ENCODE measurements at regions of chr7 and their contacts with region 1.

Region 1: DNA sequence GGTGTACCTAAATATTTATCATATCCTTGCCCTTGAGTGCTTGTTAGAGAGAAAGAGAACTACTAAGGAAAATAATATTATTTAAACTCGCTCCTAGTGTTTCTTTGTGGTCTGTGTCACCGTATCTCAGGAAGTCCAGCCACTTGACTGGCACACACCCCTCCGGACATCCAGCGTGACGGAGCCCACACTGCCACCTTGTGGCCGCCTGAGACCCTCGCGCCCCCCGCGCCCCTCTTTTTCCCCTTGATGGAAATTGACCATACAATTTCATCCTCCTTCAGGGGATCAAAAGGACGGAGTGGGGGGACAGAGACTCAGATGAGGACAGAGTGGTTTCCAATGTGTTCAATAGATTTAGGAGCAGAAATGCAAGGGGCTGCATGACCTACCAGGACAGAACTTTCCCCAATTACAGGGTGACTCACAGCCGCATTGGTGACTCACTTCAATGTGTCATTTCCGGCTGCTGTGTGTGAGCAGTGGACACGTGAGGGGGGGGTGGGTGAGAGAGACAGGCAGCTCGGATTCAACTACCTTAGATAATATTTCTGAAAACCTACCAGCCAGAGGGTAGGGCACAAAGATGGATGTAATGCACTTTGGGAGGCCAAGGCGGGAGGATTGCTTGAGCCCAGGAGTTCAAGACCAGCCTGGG is 11.4 kb downstream of the SERPINE1 start:
- DNase-seq: peak; percentile 87
- H3K4me3 ChIP-seq: no peak overlapping the region
- CTCF ChIP-seq: peak; percentile 70

Region 2: GRCh38 chr7:101085162-101085987 is 53.0 kb before region 1 on chr7 and contains the start of gene TRIM56:
- CTCF ChIA-PET with region 1: interaction called, 8 read pairs
- POLR2A ChIA-PET with region 1: interaction called, 14 read pairs
- DNase-seq: no peak
- H3K4me3 ChIP-seq: peak within 1 kb of the TSS; percentile 80
- CTCF ChIP-seq: no peak

Region 3: DNA sequence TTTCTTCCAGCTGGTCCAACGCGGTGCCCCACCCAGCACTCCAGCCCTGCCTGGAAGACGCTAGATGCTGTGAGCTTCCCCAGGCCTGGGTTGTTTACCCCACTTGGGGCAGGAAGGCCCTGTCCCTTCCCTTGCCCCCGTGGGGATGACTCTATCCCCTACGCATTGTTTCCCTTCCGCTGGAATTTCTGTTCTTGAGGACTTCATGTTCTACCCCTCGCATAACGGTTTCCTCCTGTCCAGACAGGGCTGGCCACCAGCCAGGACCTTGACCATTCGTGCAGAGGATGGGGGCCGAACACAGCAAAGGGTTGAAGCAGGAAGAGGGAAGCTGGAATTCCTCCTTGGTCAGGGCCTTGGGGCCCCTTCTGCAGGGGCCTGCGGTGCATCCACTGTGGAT is 26.1 kb before region 1 on chr7:
- CTCF ChIA-PET with region 1: interaction called, 4 read pairs
- POLR2A ChIA-PET with region 1: interaction called, 22 read pairs
- DNase-seq: no peak
- H3K4me3 ChIP-seq: no peak overlapping the region
- CTCF ChIP-seq: no peak

Region 4: GRCh38 chr7:101159696-101160654 is 21.6 kb after region 1 on chr7:
- CTCF ChIA-PET with region 1: interaction called, 58 read pairs
- POLR2A ChIA-PET with region 1: no interaction called
- DNase-seq: no peak
- H3K4me3 ChIP-seq: no peak overlapping the region
- CTCF ChIP-seq: no peak

Region 5: GRCh38 chr7:101185258-101185839 is 47.0 kb after region 1 on chr7:
- CTCF ChIA-PET with region 1: interaction called, 353 read pairs
- POLR2A ChIA-PET with region 1: no interaction called
- DNase-seq: no peak
- H3K4me3 ChIP-seq: no peak overlapping the region
- CTCF ChIP-seq: no peak

Region 6: DNA sequence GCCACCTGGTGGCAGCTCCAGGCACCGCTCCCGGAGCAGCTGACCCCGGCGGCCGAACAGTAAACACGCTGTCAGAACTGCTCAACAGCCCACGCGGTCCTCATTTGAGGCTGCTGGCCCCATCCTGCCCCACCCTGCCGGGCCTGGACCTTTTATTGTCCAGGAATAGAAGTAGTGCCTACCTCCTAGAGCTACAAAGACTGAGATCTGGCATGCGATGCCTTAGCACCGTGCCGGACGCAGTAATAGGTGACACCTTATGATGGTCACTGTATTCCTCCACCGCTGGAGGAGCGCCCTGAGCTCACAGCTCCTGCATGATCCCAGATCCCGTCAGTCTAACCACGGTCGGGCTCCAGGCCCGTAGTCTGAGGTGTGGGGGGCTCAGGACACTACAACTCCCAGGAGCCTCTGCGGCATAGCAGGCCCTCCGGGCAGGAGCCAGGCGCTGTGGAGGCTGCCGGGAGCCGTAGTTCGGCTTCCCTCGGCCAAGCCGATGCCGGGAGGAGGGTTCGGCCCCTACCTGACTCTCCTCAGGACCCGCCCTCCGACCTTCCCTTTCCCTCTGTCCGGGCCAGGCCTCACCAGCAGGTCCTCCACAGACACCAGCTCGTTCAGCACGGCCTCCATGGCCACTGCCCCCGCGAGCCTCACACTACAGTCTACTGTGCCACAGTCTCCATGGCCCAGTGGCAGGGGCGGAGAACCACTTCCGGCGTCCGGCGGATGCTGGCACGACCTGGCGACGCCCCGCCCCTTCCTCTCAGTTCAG is 106.2 kb after region 1 on chr7 and contains the start of gene FIS1:
- CTCF ChIA-PET with region 1: interaction called, 95 read pairs
- POLR2A ChIA-PET with region 1: interaction called, 3 read pairs
- DNase-seq: no peak
- H3K4me3 ChIP-seq: peak within 1 kb of the TSS; percentile 94
- CTCF ChIP-seq: peak; percentile 94

Measured in AG04449 (cell line).